GM23248 (cell line): ENCODE measurements at regions of chr19 and their contacts with region 1.

Region 1: GRCh38 chr19:46990991-46991676 is 28.5 kb upstream of the NPAS1 start:
- DNase-seq: peak; percentile 93
- H3K4me3 ChIP-seq: no peak overlapping the region
- H3K27ac ChIP-seq: peak overlapping the region; percentile 50
- H3K4me1 ChIP-seq: peaks cover 3% of the 10 kb centered on the region
- H3K27me3 ChIP-seq: no peaks in the 10 kb centered on the region

Region 2: DNA sequence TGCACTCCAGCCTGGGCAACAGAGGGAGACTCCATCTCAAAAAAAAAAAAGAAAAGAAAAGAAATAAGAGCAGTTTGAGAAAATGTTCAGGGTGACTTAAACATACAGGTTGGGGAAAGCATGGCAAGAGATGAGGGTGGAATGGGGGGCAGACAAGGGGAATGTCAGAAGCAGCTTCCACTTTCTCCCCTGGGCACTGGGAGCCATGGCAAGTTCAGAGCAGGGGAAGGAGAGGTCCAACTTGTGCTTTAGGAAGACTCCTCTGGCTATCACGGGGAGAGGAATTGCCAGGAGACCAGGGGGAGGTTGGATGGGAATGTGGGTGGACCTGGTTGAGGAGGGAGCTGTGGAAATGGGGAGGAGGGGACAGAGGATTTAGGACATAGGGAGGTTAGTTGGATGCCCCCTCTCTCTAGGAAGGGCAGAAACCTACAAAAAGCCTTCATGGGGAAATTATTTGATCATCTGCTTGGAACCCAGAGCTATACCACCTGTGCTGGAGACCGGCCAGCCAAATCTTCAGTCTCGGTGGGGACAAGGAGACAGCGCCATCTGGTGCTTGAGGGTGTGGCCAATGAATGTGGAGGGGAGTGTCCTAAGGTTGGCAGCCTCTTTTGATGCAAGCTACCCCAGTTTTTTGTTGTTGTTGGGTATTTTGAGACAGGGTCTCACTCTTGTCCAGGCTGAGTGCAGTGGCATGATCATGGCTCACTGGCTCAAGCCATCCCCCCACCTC is 237.5 kb before region 1 on chr19:
- in situ Hi-C with region 1: loop called (anchors 10 kb)
- DNase-seq: peak; percentile 59
- H3K4me3 ChIP-seq: no peak overlapping the region
- H3K27ac ChIP-seq: no peak overlapping the region
- H3K4me1 ChIP-seq: peaks cover 4% of the 10 kb centered on the region; the same call in 1 of the 2 replicates
- H3K27me3 ChIP-seq: no peaks in the 10 kb centered on the region

Region 3: GRCh38 chr19:46850228-46851203 is 140.6 kb before region 1 on chr19 and contains the start of gene AP2S1:
- in situ Hi-C with region 1: loop called (anchors 5 kb)
- DNase-seq: peak; percentile 99
- H3K4me3 ChIP-seq: peak within 1 kb of the TSS; percentile 87
- H3K27ac ChIP-seq: peak within 1 kb of the TSS; percentile 93
- H3K4me1 ChIP-seq: 0 out of 2 replicates have a peak, but pooled peaks cover 5% of the 10 kb centered on the region
- H3K27me3 ChIP-seq: no peaks in the 10 kb centered on the region
- total RNA-seq, gene AP2S1: 224 and 231 TPM in 2 replicates